Astrocyte of the cerebellum (primary cell): ENCODE measurements at regions of chr5 and their contacts with region 1.

Region 1: DNA sequence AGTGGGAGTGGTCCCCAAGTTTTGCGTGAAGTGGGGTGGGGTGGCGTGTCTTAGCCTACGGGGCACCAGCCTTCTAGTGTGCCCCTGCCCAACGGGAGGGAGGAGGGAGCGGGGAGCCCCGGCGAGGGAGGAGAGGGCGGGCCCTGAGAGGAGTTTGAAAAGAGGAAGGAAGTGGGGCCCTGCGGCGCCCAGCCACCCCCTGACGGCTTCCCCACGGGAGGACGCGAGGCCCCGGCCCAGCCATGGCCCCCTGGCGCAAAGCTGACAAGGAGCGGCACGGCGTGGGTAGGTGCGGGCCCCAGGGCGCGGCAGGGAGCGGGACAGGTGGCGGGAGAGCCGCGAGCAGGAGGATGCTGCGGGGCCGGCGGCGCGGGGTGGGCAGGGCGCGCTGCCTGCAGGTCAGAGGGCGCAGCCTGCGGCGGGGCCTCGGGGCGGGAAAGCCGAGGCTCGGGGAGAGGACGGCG is at the start of gene DOCK2:
- DNase-seq: no peak
- H3K4me3 ChIP-seq: peak within 1 kb of the TSS; percentile 22
- CTCF ChIP-seq: no peak

Region 2: DNA sequence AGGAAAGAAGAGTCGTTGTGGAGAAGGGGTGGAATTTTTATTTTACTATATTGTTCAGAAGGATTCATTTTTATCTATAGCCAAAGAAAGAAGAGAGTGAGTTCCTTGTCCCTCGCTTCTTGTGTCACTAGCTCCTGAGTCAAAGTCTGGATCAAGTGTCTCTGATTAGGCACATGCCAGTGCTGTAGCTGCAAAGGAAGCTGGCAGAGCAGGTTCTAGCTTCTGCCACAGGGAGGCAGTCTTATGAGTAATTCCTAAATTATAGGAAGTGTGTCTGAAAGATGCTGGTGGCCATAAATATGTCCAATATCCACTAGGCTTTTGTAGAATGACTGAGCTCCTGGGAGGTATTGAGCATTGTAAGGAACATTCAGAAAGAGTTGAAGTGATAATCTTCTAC is 84.7 kb after region 1 on chr5:
- in situ Hi-C with region 1: no loop called
- DNase-seq: no peak
- H3K4me3 ChIP-seq: no peak overlapping the region
- CTCF ChIP-seq: no peak

Region 3: DNA sequence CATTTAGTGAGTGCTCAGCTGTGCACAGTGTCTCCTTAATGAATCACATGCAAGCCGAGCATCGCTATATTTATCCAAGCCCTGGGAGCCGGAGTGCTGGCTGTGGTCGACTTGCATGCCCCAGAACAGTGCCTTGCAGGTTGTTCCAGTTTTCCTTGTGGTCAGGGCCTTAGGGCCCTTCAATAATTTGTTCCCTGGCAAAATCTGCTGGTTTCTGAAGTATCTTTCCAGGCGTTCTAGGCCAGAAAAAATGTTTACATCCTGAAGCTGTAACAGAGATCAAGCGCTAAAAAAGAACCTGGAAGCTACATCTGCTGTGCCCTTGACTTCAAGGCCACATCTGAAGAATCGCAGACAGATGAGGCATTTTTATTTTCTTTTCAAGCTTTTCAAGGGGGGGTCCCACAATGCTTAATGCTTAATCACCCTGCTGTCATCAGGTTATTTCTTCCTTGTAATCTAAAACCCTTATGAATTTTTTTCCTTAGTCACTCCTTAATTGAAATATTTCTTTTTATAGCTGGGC is 105.7 kb after region 1 on chr5:
- in situ Hi-C with region 1: loop called (anchors 5 kb)
- DNase-seq: peak; percentile 93
- H3K4me3 ChIP-seq: no peak overlapping the region
- CTCF ChIP-seq: no peak